Natural killer cell (primary cell): ENCODE measurements at regions of chr6 and their contacts with region 1.

Region 1: DNA sequence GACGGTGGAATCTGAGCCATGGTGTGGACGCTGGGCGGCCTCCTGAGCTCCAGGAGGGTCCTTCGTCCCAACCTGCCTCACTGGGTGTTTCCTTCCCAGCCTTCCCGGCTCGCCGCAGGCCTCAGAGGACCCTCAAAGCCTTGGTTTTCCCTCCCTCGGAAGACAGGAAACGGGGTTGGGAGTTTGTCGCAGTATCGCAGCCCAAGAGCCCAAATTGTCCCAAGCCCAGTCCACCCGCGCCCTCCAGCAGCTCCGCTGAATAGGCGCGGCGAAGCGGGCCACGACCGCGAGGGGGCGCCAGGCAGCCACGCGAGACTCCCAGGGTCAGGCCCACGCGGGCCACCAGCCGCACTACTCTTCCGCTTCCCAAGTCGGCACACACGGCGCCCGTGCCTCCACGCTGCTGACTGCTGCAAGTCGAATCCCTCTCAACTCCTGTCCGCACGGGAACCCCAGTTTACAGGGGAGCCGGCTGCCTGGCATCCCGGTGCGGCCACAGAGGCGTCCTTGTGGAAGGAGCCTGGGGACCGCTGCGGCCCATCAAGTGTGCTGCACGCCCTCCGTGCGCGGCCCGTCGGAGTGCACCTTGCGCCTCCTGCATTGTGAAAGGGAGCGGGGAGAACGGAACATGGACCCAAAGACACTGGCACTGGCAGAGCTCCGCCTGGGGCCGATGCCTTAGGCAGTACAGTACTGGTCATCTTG is 40.4 kb upstream of the HMGA1 start:
- DNase-seq: peak; percentile 92 to 93
- ATAC-seq: peak; percentile 96 to 99 (median 99)
- H3K4me3 ChIP-seq: peak overlapping the region; percentile 55
- H3K4me3 Mint-ChIP-seq: peak overlapping the region; percentile 87
- H3K27ac ChIP-seq: no peak overlapping the region
- H3K27ac Mint-ChIP-seq: peak overlapping the region in 1 of 2 donors; percentile 85
- H3K4me1 ChIP-seq: peaks cover 12% of the 10 kb centered on the region
- H3K4me1 Mint-ChIP-seq: peaks cover 5 to 7% of the 10 kb centered on the region in 2 donors
- H3K27me3 ChIP-seq: no peaks in the 10 kb centered on the region
- H3K27me3 Mint-ChIP-seq: peaks cover 0 to 8% of the 10 kb centered on the region in 2 donors
- CTCF ChIP-seq: peak; percentile 99

Region 2: GRCh38 chr6:33914645-33915044 is 281.6 kb before region 1 on chr6:
- intact Hi-C with region 1: no loop called
- DNase-seq: peak in 1 of 2 donors; percentile 77
- ATAC-seq: peak; percentile 56 to 90 (median 87)
- H3K4me3 ChIP-seq: no peak overlapping the region
- H3K4me3 Mint-ChIP-seq: peak overlapping the region; percentile 83
- H3K27ac ChIP-seq: peak overlapping the region; percentile 26
- H3K27ac Mint-ChIP-seq: peak overlapping the region; percentile 61 to 66
- H3K4me1 ChIP-seq: peaks cover 26% of the 10 kb centered on the region
- H3K4me1 Mint-ChIP-seq: peaks cover 39 to 50% of the 10 kb centered on the region in 2 donors
- H3K27me3 ChIP-seq: no peaks in the 10 kb centered on the region
- H3K27me3 Mint-ChIP-seq: peaks cover 33 to 38% of the 10 kb centered on the region in 2 donors
- CTCF ChIP-seq: no peak

Region 3: DNA sequence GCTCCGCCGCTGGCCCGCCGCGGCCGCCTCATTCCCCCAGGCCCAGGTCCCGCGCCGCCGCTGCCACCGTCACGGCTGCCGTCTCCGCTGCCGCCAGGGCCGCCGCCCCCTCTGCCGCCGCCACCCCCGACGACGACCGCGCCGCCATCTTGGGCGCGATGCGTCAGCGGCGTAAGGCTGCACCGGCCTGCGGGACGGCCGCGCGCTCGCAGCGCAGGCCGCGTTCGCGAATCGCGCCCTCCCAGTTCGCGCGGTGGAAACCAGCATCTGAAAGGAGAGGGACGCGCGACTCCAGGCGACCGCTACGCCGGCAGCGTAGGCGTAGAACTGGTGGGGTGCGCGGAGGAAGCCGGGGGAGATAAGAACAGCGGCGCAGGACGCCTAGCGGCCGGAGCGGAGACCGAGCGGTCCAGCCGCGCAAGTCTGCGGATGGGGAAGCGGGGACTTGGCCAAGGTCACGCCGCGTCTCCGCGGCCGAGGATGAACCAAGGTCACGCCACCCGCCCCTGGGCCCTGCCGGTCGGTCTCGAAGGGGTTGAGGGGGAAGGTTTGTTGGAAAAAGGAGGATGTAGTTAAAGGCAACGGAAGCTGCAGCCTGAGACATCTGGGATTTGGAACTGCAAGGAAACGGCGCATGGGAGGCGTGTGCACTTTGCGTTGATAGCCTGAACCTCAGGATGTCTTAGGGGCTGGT is 196.4 kb after region 1 on chr6 and contains the start of gene NUDT3:
- intact Hi-C with region 1: loop called (anchors 1 kb)
- DNase-seq: peak; percentile 93 to 98
- ATAC-seq: peak; percentile 86 to 95 (median 88)
- H3K4me3 ChIP-seq: peak within 1 kb of the TSS; percentile 58
- H3K4me3 Mint-ChIP-seq: peak within 1 kb of the TSS; percentile 50
- H3K27ac ChIP-seq: peak within 1 kb of the TSS; percentile 65
- H3K27ac Mint-ChIP-seq: peak within 1 kb of the TSS in 1 of 2 donors; percentile 45
- H3K4me1 ChIP-seq: peaks cover 17% of the 10 kb centered on the region
- H3K4me1 Mint-ChIP-seq: peaks cover 9 to 22% of the 10 kb centered on the region in 2 donors
- H3K27me3 ChIP-seq: no peaks in the 10 kb centered on the region
- H3K27me3 Mint-ChIP-seq: no peaks in the 10 kb centered on the region
- CTCF ChIP-seq: peak; percentile 77
- total RNA-seq, gene NUDT3: 22.0 to 26.3 (median 26.1) TPM

Region 4: GRCh38 chr6:34414999-34415858 is 219.0 kb after region 1 on chr6:
- intact Hi-C with region 1: loop called (anchors 1 kb)
- DNase-seq: peak in 1 of 2 donors; percentile 74
- ATAC-seq: peak; percentile 67 to 77 (median 77)
- H3K4me3 ChIP-seq: no peak overlapping the region
- H3K4me3 Mint-ChIP-seq: no peak overlapping the region
- H3K27ac ChIP-seq: no peak overlapping the region
- H3K27ac Mint-ChIP-seq: peak overlapping the region in 1 of 2 donors; percentile 44
- H3K4me1 ChIP-seq: no peaks in the 10 kb centered on the region
- H3K4me1 Mint-ChIP-seq: peaks cover 16 to 18% of the 10 kb centered on the region in 2 donors
- H3K27me3 ChIP-seq: no peaks in the 10 kb centered on the region
- H3K27me3 Mint-ChIP-seq: no peaks in the 10 kb centered on the region
- CTCF ChIP-seq: peak; percentile 48

Region 5: GRCh38 chr6:34608321-34609091 is 412.2 kb after region 1 on chr6:
- intact Hi-C with region 1: loop called (anchors 1 kb)
- DNase-seq: no peak
- ATAC-seq: no peak
- H3K4me3 ChIP-seq: no peak overlapping the region
- H3K4me3 Mint-ChIP-seq: no peak overlapping the region
- H3K27ac ChIP-seq: no peak overlapping the region
- H3K27ac Mint-ChIP-seq: peak overlapping the region in 1 of 2 donors; percentile 29
- H3K4me1 ChIP-seq: no peaks in the 10 kb centered on the region
- H3K4me1 Mint-ChIP-seq: peaks cover 17 to 31% of the 10 kb centered on the region in 2 donors
- H3K27me3 ChIP-seq: no peaks in the 10 kb centered on the region
- H3K27me3 Mint-ChIP-seq: no peaks in the 10 kb centered on the region
- CTCF ChIP-seq: no peak